ENCODE measurements at regions of chr12 and their contacts with region 1.

Region 1: DNA sequence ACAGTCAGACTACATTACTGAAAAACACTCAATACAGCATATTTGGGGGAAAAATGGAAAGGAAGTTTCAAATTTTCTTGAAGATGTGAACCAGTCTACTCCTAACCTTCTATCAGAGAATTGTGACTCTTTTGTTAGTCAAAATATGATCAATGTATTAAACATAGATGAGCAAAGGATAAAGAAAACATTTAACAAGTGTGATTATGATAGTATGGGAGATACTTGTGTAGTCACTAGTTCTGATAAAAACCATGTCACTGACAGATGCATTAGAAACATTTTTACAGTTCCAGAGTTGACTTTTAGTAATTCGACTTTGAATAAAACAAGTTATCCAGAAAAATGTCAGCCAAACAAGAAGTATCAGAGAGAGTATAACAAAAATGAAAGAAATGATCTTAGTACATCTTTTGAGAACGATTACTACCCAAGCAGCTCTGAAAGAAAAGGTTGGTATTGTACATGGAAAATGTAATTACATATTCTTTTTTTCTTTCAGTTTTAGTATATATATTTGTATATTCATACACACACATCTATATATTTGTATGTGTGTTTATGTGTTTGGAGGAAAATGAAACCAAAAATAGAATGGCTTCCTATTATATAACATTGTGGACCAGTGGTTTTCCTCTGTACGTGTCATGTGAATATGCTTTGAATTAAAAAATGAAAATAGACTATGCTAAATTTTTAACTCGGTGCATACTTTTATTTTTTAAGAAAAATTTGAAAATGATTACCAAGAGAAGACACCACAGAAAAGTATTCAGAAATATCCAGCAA is 63.3 kb upstream of the ABCD2 start:
- DNase-seq: peak in 4 of 5 donors; percentile 57 to 73 (median 64)
- H3K4me3 ChIP-seq: peak overlapping the region; percentile 1 to 37
- H3K4me3 Mint-ChIP-seq: peak overlapping the region; percentile 78 to 92 (median 88)
- H3K27ac ChIP-seq: peak overlapping the region; percentile 80
- H3K27ac Mint-ChIP-seq: peak overlapping the region; percentile 86 to 100 (median 98)
- H3K4me1 ChIP-seq: peaks cover 43% of the 10 kb centered on the region
- H3K4me1 Mint-ChIP-seq: peaks cover 30 to 43% (median 37%) of the 10 kb centered on the region in 4 donors
- H3K27me3 ChIP-seq: no peaks in the 10 kb centered on the region
- H3K27me3 Mint-ChIP-seq: no peaks in the 10 kb centered on the region

Region 2: GRCh38 chr12:39309516-39309915 is 373.4 kb before region 1 on chr12:
- CTCF ChIA-PET with region 1: no interaction called
- POLR2A ChIA-PET with region 1: no interaction called
- intact Hi-C with region 1: no loop called
- DNase-seq: no peak
- H3K4me3 ChIP-seq: no peak overlapping the region
- H3K4me3 Mint-ChIP-seq: no peak overlapping the region
- H3K27ac ChIP-seq: no peak overlapping the region
- H3K27ac Mint-ChIP-seq: no peak overlapping the region
- H3K4me1 ChIP-seq: no peaks in the 10 kb centered on the region
- H3K4me1 Mint-ChIP-seq: no peaks in the 10 kb centered on the region
- H3K27me3 ChIP-seq: no peaks in the 10 kb centered on the region
- H3K27me3 Mint-ChIP-seq: no peaks in the 10 kb centered on the region

Region 3: GRCh38 chr12:39671898-39672875 is 10.7 kb before region 1 on chr12:
- CTCF ChIA-PET with region 1: interaction called, 3 read pairs
- POLR2A ChIA-PET with region 1: interaction called, 21 read pairs
- intact Hi-C with region 1: loop called (anchors 2 kb)
- DNase-seq: no peak
- H3K4me3 ChIP-seq: no peak overlapping the region
- H3K4me3 Mint-ChIP-seq: peak overlapping the region in 1 of 8 donors; percentile 27
- H3K27ac ChIP-seq: no peak overlapping the region
- H3K27ac Mint-ChIP-seq: peak overlapping the region in 3 of 7 donors; percentile 11 to 72 (median 36)
- H3K4me1 ChIP-seq: peaks cover 48% of the 10 kb centered on the region
- H3K4me1 Mint-ChIP-seq: peaks cover 31 to 74% (median 50%) of the 10 kb centered on the region in 4 donors
- H3K27me3 ChIP-seq: no peaks in the 10 kb centered on the region
- H3K27me3 Mint-ChIP-seq: no peaks in the 10 kb centered on the region